Posterior vena cava (tissue), 2 donors: ENCODE measurements at regions of chr12 and their contacts with region 1.

Region 1: DNA sequence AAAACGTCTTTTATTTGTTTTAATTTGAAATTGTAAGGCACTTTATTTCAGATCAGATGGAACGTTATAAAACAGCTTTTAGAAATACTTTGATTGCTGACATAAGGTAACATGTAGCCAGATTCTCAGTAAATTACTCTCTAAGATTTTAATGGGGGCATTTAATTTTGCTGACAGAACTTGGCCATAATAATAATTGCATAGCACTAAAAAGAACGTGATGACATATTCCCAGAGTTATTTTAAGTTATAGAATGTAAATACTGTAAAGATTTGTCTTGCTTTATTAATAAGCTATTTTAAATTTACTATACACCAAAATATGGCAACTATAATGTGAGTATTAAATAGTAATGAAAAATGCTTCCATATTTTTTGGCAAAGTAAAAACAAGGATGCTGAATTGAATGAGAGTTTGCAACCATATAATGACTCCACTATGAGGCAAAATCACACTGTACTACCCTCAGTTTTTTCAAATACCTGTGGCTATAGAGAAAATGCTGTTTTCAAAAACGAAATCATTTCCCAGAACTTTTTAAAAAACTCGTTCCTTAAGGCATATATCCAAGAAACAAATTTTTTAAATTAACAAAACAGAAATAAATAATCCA is 876 bp downstream of the LUM start:
- DNase-seq: no peak

Region 2: GRCh38 chr12:91098941-91099340 is 11.5 kb before region 1 on chr12:
- intact Hi-C with region 1: loop called in 1 of 2 experiments (anchors 1 kb)
- DNase-seq: no peak

Region 3: DNA sequence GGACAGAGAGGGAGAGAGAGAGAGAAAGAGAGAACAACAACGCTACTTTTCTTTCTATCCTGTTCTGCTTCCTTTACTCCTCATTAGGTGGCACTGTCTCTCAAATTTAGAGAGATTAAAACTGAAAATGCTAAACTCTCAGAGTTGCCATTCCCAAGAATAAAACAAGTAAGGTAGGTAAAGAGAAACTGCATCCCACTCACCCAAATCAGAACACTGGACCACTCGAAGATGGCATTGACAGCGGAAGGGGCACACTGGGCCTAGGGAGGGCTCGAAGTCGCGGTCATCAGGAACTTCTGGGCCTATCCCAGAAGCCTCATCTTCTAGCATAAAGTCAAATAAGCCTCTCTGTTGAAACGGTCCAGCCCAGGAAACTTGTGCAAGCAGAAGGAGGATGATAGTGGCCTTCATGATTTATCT is 67.7 kb after region 1 on chr12:
- intact Hi-C with region 1: no loop called
- DNase-seq: peak; percentile 54